ENCODE measurements at regions of chr11 and their contacts with region 1.

Region 1: GRCh38 chr11:128630367-128631230 is 43.2 kb upstream of the ETS1 start:
- DNase-seq: peak; percentile 96
- ATAC-seq: peak; percentile 87
- H3K4me3 ChIP-seq: peak overlapping the region in 2 of 5 experiments; percentile 3 to 11
- H3K4me3 Mint-ChIP-seq: peak overlapping the region; percentile 65
- H3K27ac ChIP-seq: peak overlapping the region; percentile 43 to 90
- H3K27ac Mint-ChIP-seq: peak overlapping the region; percentile 93
- H3K4me1 ChIP-seq: peaks cover 66 to 68% of the 10 kb centered on the region in 2 donors
- H3K4me1 Mint-ChIP-seq: peaks cover 66% of the 10 kb centered on the region
- H3K27me3 ChIP-seq: no peaks in the 10 kb centered on the region
- H3K27me3 Mint-ChIP-seq: no peaks in the 10 kb centered on the region
- CTCF ChIP-seq: peak; percentile 86

Region 2: GRCh38 chr11:128290106-128290840 is 340.3 kb before region 1 on chr11:
- CTCF ChIA-PET with region 1: interaction called, 251 read pairs
- POLR2A ChIA-PET with region 1: interaction called, 8 read pairs
- intact Hi-C with region 1: loop called (anchors 1 kb)
- DNase-seq: peak; percentile 91
- ATAC-seq: peak; percentile 71
- H3K4me3 ChIP-seq: peak overlapping the region in 4 of 5 experiments; percentile 33 to 48 (median 48)
- H3K4me3 Mint-ChIP-seq: peak overlapping the region; percentile 78
- H3K27ac ChIP-seq: peak overlapping the region; percentile 94 to 95
- H3K27ac Mint-ChIP-seq: peak overlapping the region; percentile 99
- H3K4me1 ChIP-seq: peaks cover 73 to 74% of the 10 kb centered on the region in 2 donors
- H3K4me1 Mint-ChIP-seq: peaks cover 95% of the 10 kb centered on the region
- H3K27me3 ChIP-seq: no peaks in the 10 kb centered on the region
- H3K27me3 Mint-ChIP-seq: no peaks in the 10 kb centered on the region
- CTCF ChIP-seq: peak; percentile 90

Region 3: GRCh38 chr11:128482512-128483191 is 147.9 kb before region 1 on chr11:
- CTCF ChIA-PET with region 1: interaction called, 35 read pairs
- POLR2A ChIA-PET with region 1: interaction called, 3 read pairs
- intact Hi-C with region 1: no loop called
- DNase-seq: no peak
- ATAC-seq: peak; percentile 13
- H3K4me3 ChIP-seq: peak overlapping the region in 2 of 5 experiments; percentile 27 to 37
- H3K4me3 Mint-ChIP-seq: peak overlapping the region; percentile 61
- H3K27ac ChIP-seq: peak overlapping the region; percentile 77 to 90
- H3K27ac Mint-ChIP-seq: peak overlapping the region; percentile 95
- H3K4me1 ChIP-seq: peaks cover 82% of the 10 kb centered on the region in 2 donors
- H3K4me1 Mint-ChIP-seq: peaks cover 92% of the 10 kb centered on the region
- H3K27me3 ChIP-seq: no peaks in the 10 kb centered on the region
- H3K27me3 Mint-ChIP-seq: no peaks in the 10 kb centered on the region
- CTCF ChIP-seq: no peak

Region 4: DNA sequence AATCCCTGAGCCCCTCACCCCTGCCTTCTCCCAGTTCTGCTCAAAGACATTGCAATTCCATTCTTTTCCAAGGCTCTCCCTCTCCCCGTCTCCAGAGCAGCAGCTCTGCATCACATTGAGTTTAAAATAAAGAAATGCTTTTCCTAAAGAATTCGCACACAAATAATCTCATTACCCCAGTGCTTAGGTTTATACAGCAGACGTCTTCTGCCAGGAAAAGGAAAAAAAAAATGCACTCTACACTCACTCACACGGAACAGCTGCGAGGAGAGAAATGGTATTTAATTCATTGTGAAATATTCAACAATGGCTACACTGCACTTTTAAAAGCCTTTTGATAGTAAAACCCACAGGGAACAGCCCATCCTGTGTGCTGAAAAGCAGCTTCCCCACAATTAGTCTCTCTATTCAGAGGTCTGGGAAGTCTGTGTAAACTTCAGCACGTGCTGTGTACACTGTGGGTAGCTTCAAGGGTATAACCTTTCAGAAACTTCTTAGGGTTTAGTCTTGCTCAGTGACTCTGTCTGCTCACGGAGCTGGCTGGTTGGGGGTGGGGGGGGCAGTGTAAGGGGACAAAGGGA is 86.0 kb before region 1 on chr11:
- CTCF ChIA-PET with region 1: interaction called, 11 read pairs
- POLR2A ChIA-PET with region 1: no interaction called
- intact Hi-C with region 1: no loop called
- DNase-seq: peak; percentile 21
- ATAC-seq: no peak
- H3K4me3 ChIP-seq: no peak overlapping the region
- H3K4me3 Mint-ChIP-seq: peak overlapping the region; percentile 6
- H3K27ac ChIP-seq: no peak overlapping the region
- H3K27ac Mint-ChIP-seq: peak overlapping the region; percentile 60
- H3K4me1 ChIP-seq: peaks cover 31 to 33% of the 10 kb centered on the region in 2 donors
- H3K4me1 Mint-ChIP-seq: peaks cover 40% of the 10 kb centered on the region
- H3K27me3 ChIP-seq: no peaks in the 10 kb centered on the region
- H3K27me3 Mint-ChIP-seq: no peaks in the 10 kb centered on the region
- CTCF ChIP-seq: no peak

Region 5: DNA sequence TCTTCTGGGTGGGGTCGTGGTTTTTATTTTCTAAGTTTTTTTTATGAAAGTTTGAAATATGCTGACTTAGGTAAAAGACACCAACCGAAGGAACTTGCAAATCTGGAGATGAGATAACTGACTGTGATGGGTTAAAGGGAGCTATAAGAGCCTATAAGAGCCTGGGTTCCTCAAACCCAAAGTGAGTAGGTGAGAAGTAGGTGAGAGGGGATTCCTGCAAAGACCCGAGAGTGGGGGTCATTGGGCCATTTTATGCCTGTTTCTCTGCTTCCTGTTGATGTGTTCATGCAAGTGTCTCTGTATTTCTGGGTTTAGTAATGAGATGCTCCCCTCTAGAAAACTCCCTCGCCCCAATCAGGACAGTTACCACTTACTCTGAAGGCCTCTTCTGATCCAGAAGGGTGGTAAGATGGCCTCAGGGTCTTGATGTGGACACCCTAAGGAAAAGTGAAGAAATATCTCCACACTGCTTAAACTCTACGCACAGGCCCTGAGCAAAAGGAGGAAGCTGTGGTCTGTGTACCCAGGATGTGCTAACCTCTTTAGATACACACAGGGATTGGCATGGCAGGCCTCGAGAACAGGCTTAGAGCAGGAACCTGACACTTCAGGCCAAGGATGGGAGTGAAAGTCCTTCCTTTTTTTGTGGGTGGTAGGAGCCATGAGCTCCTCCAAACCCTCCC is 65.1 kb after region 1 on chr11:
- CTCF ChIA-PET with region 1: interaction called, 8 read pairs
- POLR2A ChIA-PET with region 1: interaction called, 6 read pairs
- intact Hi-C with region 1: loop called (anchors 2 kb)
- DNase-seq: peak; percentile 81
- ATAC-seq: peak; percentile 53
- H3K4me3 ChIP-seq: peak overlapping the region; percentile 62 to 100 (median 94)
- H3K4me3 Mint-ChIP-seq: peak overlapping the region; percentile 94
- H3K27ac ChIP-seq: peak overlapping the region; percentile 61 to 92
- H3K27ac Mint-ChIP-seq: peak overlapping the region; percentile 95
- H3K4me1 ChIP-seq: peaks cover 55 to 62% of the 10 kb centered on the region in 2 donors
- H3K4me1 Mint-ChIP-seq: peaks cover 62% of the 10 kb centered on the region
- H3K27me3 ChIP-seq: peaks cover 0 to 12% (median 4%) of the 10 kb centered on the region in 4 experiments
- H3K27me3 Mint-ChIP-seq: no peaks in the 10 kb centered on the region
- CTCF ChIP-seq: no peak

Region 6: GRCh38 chr11:128831174-128832120 is 200.8 kb after region 1 on chr11:
- CTCF ChIA-PET with region 1: interaction called, 93 read pairs
- POLR2A ChIA-PET with region 1: interaction called, 5 read pairs
- intact Hi-C with region 1: loop called (anchors 2 kb)
- DNase-seq: peak; percentile 88
- ATAC-seq: peak; percentile 89
- H3K4me3 ChIP-seq: peak overlapping the region; percentile 22 to 55 (median 36)
- H3K4me3 Mint-ChIP-seq: peak overlapping the region; percentile 74
- H3K27ac ChIP-seq: peak overlapping the region; percentile 60 to 78
- H3K27ac Mint-ChIP-seq: peak overlapping the region; percentile 90
- H3K4me1 ChIP-seq: peaks cover 66 to 68% of the 10 kb centered on the region in 2 donors
- H3K4me1 Mint-ChIP-seq: peaks cover 73% of the 10 kb centered on the region
- H3K27me3 ChIP-seq: no peaks in the 10 kb centered on the region
- H3K27me3 Mint-ChIP-seq: no peaks in the 10 kb centered on the region
- CTCF ChIP-seq: peak; percentile 93